Activated CD4-positive, alpha-beta T cell treated with anti-CD3 and anti-CD28 coated beads, Interleukin-2, amount 10 ng/mL, durations not matched to agents 24 days and 14 days (primary cell): ENCODE measurements at regions of chr1 and their contacts with region 1.

Region 1: GRCh38 chr1:1122078-1122811 is 6.4 kb upstream of the C1orf159 start:
- DNase-seq: peak; percentile 96
- H3K4me3 Mint-ChIP-seq: no peak overlapping the region
- H3K27ac Mint-ChIP-seq: peak overlapping the region; percentile 25
- H3K4me1 Mint-ChIP-seq: no peaks in the 10 kb centered on the region
- H3K27me3 Mint-ChIP-seq: peaks cover 9% of the 10 kb centered on the region

Region 2: DNA sequence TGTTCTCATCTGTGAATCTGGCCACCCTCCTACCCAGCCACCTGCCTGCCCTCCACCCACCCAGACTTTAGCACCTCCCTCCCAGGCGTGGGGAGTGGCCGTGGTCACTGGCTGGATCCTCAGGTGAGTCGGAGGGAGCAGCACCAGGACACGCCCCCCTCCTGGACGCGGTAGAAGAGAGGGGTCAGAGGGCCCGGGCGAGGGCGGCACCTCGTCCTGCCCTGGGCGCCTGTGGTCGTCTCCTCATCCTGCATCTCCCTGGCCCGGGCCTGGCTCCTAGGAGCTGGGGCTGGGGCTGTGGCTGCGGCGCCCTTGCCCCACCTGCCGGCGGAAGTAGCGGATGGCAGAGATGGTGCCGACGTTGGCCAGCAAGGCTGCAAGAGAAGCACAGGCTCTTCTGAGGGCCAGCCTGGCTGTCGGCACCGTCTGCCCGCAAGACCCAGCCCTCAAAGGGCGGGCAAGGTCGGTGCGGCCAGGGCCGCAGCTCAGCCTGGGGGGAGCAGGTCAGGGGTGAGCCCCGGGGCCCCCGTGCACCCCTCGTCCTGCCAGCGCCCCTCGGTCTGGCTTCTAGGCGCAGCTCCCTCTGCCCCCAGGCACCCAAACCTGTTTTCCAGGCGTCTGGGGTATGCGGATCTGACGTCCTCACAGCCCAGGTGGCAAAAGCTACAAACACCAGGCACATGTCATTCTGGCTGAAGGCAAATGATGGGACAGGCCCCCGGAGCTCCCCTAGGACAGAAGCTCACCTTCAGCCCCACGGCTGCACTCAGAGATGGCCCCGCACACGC is 146.2 kb before region 1 on chr1:
- intact Hi-C with region 1: no loop called
- DNase-seq: peak; percentile 91
- H3K4me3 Mint-ChIP-seq: no peak overlapping the region
- H3K27ac Mint-ChIP-seq: no peak overlapping the region
- H3K4me1 Mint-ChIP-seq: peaks cover 5% of the 10 kb centered on the region
- H3K27me3 Mint-ChIP-seq: peaks cover 6% of the 10 kb centered on the region

Region 3: DNA sequence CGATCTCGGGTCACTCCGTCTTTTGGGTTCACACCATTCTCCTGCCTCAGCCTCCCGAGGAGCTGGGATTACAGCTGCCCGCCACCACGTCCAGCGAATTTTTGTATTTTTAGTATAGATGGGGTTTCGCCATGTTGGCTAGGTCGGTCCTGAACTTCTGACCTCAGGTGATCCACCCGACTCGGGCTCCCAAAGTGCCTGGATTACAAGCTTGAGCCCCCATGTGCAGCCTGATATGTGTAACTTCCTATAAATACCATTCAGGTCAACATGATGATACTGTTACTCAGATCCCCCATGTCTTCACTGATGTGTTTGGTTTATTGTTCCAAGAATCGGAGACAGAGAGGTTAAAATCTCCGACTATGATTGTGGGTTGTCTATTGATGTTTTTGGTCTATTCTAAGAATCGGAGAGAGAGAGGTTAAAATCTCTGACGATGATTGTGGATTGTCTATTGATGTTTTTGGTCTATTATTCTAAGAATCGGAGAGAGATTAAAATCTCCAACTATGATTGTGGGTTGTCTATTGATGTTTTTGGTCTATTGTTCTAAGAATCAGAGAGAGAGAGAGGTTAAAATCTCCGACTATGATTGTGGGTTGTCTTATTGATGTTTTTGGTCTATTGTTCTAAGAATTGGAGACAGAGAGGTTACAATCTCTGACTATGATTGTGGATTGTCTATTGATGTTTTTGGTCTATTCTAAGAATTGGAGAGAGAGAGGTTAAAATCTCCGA is 23.4 kb before region 1 on chr1:
- intact Hi-C with region 1: no loop called
- DNase-seq: no peak
- H3K4me3 Mint-ChIP-seq: peak overlapping the region; percentile 0
- H3K27ac Mint-ChIP-seq: peak overlapping the region; percentile 64
- H3K4me1 Mint-ChIP-seq: peaks cover 16% of the 10 kb centered on the region
- H3K27me3 Mint-ChIP-seq: peaks cover 9% of the 10 kb centered on the region

Region 4: GRCh38 chr1:1231400-1232223 is 109.4 kb after region 1 on chr1 and contains the start of gene SDF4:
- intact Hi-C with region 1: loop called (anchors 1 kb)
- DNase-seq: peak; percentile 99
- H3K4me3 Mint-ChIP-seq: peak within 1 kb of the TSS; percentile 91
- H3K27ac Mint-ChIP-seq: peak within 1 kb of the TSS; percentile 86
- H3K4me1 Mint-ChIP-seq: peaks cover 26% of the 10 kb centered on the region
- H3K27me3 Mint-ChIP-seq: no peaks in the 10 kb centered on the region
- total RNA-seq, gene SDF4: 175 and 194 TPM in 2 replicates

Region 5: DNA sequence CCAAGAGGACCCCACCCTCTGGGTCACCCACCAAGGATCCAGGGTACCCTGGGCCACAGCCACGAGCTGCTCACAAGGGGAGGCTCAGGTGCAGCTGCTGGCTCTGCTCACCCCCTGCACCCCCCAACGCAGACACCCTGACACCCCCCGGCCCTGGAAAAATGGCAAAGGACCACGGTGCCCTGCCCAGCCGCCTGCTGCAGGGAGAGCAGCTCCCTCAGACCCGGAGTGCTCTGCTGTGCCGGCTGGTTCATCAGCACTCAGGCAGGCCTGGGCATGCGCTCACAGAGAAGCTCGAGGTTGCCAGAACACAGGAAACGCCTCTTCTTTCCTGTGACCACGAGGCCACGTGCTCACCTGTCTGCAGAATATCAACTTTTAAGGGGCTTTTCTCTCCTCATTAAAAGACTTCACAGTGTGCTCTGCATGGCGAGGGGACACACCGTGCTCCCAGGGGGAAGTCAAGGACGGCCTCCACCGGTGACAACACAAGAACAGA is 128.6 kb after region 1 on chr1:
- intact Hi-C with region 1: loop called (anchors 2 kb)
- DNase-seq: peak; percentile 90
- H3K4me3 Mint-ChIP-seq: peak overlapping the region; percentile 61
- H3K27ac Mint-ChIP-seq: peak overlapping the region; percentile 96
- H3K4me1 Mint-ChIP-seq: peaks cover 5% of the 10 kb centered on the region
- H3K27me3 Mint-ChIP-seq: no peaks in the 10 kb centered on the region

Region 6: DNA sequence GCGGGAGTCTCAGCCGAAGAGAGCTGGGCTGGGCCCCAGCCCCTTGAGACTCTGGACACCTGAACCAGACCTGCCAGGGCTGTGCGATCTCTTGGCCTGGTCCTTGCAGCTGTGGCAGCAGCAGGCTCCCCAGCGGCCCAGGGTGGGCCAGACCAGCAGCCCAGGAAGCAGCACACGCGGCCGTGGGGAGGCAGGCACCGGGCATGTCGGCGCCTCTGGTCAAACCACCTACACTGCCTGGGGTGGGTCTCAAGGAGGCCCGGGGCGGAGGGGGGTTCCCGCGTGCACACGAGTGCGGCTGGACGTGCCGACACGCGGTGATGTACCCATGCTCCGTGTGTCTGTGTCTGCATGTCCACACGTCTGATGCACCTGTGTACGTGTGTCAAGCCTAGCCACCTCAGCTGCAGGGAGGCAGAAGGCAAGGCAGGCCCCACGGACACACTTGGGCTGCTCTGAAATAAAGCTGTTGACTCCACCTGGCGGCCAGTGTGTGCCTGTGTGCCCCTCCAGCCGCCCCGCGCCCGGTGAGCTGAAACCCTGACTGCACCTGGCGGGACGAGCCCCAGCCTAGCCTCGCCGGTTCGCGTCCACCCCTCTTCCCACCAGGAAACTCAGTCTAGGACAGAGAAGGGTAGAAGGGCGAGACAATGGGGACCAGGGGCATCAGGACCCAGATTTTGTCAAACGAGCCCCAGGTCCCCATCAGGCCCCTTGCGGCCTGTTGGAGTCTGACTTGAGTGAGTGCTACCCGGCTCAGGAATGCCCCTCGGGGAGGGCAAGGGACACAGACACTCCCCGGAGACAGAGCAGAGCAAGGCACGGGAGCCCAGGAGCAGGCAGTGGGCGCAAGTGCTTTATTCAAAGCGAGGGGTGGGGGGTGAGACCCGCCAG is 169.6 kb after region 1 on chr1:
- intact Hi-C with region 1: loop called (anchors 1 kb)
- DNase-seq: peak; percentile 89
- H3K4me3 Mint-ChIP-seq: no peak overlapping the region
- H3K27ac Mint-ChIP-seq: no peak overlapping the region
- H3K4me1 Mint-ChIP-seq: peaks cover 4% of the 10 kb centered on the region
- H3K27me3 Mint-ChIP-seq: no peaks in the 10 kb centered on the region